ENCODE measurements at regions of chr15 and their contacts with region 1.

Region 1: DNA sequence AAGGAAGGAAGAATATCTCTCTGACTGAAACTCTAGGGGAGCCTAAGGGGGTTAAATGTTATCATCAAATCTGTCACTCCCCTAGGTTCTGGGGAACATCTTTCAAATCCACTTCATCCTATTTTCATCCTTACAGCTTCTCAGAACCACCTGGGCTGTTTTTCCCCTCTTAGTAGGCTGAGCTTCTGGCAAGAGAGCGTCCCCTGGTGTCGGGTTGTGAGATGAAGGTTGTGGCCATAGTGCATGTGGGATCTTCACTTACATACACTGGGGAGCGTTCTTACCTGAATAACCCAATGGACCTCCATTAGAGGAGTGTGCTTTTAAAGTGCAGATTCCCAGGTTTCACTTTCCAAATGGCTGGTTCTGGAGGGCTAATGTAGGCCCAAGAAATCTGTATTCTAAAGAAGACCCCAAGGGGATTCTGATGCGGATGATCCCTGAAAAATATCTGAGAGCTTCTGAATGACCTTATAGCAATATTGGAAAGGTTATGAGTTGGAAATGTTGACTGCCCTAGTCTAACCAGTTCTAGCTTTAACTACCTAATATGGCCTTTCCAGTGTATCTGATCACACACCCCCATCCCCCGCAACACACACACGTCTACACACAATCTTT is 663.7 kb downstream of the AGBL1 start:
- DNase-seq: no peak
- CTCF ChIP-seq: peak; percentile 30

Region 2: GRCh38 chr15:86231864-86232721 is 511.3 kb before region 1 on chr15:
- CTCF ChIA-PET with region 1: interaction called, 21 read pairs
- POLR2A ChIA-PET with region 1: no interaction called
- DNase-seq: peak; percentile 39
- CTCF ChIP-seq: peak; percentile 56

Region 3: GRCh38 chr15:86711476-86711875 is 31.9 kb before region 1 on chr15:
- CTCF ChIA-PET with region 1: no interaction called
- POLR2A ChIA-PET with region 1: no interaction called
- DNase-seq: no peak
- CTCF ChIP-seq: no peak

Region 4: DNA sequence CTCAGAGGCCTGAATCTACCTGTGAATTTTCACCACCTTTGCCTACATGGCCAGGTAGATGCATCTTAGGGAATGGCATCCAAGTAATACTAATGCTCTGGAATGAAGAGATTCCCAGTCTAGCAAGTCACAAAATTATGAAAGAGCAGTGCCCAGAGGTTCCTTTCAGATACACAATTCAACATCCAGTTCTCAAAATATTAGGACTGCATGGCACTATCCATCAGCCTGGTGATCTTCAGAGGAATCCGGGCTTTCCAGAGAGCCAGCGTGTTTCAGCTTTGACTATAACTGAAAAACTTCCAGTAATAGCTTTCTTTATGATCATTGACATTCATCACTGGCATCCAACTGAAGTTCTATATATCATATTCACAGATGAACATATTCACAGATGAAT is 186.1 kb after region 1 on chr15:
- CTCF ChIA-PET with region 1: no interaction called
- POLR2A ChIA-PET with region 1: no interaction called
- DNase-seq: no peak
- CTCF ChIP-seq: no peak